ENCODE measurements at regions of chr5 and their contacts with region 1.

Region 1: GRCh38 chr5:126676195-126676624 is 75.5 kb downstream of the PHAX start:
- DNase-seq: peak; percentile 78
- H3K4me3 Mint-ChIP-seq: no peak overlapping the region
- H3K27ac Mint-ChIP-seq: no peak overlapping the region
- H3K4me1 Mint-ChIP-seq: peaks cover 12% of the 10 kb centered on the region
- H3K27me3 Mint-ChIP-seq: peaks cover 5% of the 10 kb centered on the region

Region 2: DNA sequence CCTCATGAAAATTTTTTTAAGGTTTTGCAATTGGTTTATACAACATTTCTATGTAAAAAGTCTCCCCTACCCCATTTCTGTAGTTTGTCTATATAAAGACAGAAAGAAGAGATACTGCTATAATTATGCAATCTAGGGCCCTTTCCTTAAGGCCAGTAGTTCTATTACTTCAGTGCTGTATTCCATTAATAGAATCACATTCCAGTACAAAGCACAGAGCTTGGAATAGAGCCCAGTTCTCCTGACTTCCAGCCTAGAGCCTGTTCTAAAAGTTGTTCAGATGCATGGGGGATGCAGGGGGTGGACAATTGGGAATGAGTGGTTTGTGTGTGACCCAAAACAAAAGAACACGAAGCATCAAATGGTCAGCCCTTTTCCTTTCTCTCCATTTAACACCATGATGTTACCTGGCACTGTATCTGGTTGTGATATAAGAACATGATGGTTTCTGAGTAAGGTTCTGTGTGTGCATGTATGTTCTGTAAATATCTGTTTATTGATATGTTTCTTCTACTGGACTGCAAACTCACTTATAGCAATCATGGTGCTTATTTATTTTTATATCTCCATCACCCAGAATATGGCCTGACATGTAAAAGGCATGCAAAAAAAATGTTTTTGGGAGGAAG is 261.2 kb before region 1 on chr5:
- CTCF ChIA-PET with region 1: no interaction called
- DNase-seq: no peak
- H3K4me3 Mint-ChIP-seq: no peak overlapping the region
- H3K27ac Mint-ChIP-seq: no peak overlapping the region
- H3K4me1 Mint-ChIP-seq: peaks cover 6% of the 10 kb centered on the region
- H3K27me3 Mint-ChIP-seq: peaks cover 13% of the 10 kb centered on the region

Region 3: GRCh38 chr5:126641387-126641786 is 34.8 kb before region 1 on chr5:
- CTCF ChIA-PET with region 1: no interaction called
- DNase-seq: no peak
- H3K4me3 Mint-ChIP-seq: no peak overlapping the region
- H3K27ac Mint-ChIP-seq: no peak overlapping the region
- H3K4me1 Mint-ChIP-seq: no peaks in the 10 kb centered on the region
- H3K27me3 Mint-ChIP-seq: peaks cover 6% of the 10 kb centered on the region

Region 4: DNA sequence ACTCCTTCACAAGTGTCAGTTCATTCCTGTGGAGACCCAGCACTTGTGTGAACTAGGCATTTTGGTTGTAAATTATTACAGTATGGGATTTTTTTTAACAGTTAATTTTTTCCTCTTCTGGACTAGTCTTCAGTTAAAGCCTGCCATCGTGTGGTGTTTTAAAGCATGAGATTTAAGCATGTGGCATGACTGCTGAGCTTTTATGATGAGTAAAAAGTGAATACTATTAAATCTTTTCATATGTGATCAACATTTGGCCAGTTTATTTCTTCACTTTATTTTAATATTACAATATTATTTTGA is 125.7 kb after region 1 on chr5:
- CTCF ChIA-PET with region 1: interaction called, 74 read pairs
- DNase-seq: peak; percentile 28
- H3K4me3 Mint-ChIP-seq: no peak overlapping the region
- H3K27ac Mint-ChIP-seq: peak overlapping the region; percentile 55
- H3K4me1 Mint-ChIP-seq: peaks cover 45% of the 10 kb centered on the region
- H3K27me3 Mint-ChIP-seq: no peaks in the 10 kb centered on the region

Region 5: GRCh38 chr5:126808521-126808988 is 132.3 kb after region 1 on chr5:
- CTCF ChIA-PET with region 1: interaction called, 74 read pairs
- DNase-seq: no peak
- H3K4me3 Mint-ChIP-seq: no peak overlapping the region
- H3K27ac Mint-ChIP-seq: peak overlapping the region; percentile 22
- H3K4me1 Mint-ChIP-seq: peaks cover 43% of the 10 kb centered on the region
- H3K27me3 Mint-ChIP-seq: no peaks in the 10 kb centered on the region

Measured in activated naive CD4-positive, alpha-beta T cell treated with anti-CD3 and anti-CD28 coated beads, Interleukin-2, amount 10 ng/mL, durations not matched to agents 7 days and 5 days (primary cell).